Activated CD4-positive, alpha-beta memory T cell treated with anti-CD3 and anti-CD28 coated beads for 36 hours (primary cell): ENCODE measurements at regions of chr17 and their contacts with region 1.

Region 1: GRCh38 chr17:57243171-57243948 is 13.0 kb upstream of the MSI2 start:
- DNase-seq: peak; percentile 86
- H3K4me3 Mint-ChIP-seq: no peak overlapping the region
- H3K27ac Mint-ChIP-seq: no peak overlapping the region
- H3K4me1 Mint-ChIP-seq: no peaks in the 10 kb centered on the region
- H3K27me3 Mint-ChIP-seq: peaks cover 2% of the 10 kb centered on the region

Region 2: GRCh38 chr17:56960596-56961538 is 282.5 kb before region 1 on chr17 and contains the start of gene COIL:
- CTCF ChIA-PET with region 1: no interaction called
- POLR2A ChIA-PET with region 1: no interaction called
- intact Hi-C with region 1: no loop called
- DNase-seq: peak; percentile 95
- H3K4me3 Mint-ChIP-seq: peak within 1 kb of the TSS; percentile 80
- H3K27ac Mint-ChIP-seq: peak within 1 kb of the TSS; percentile 85
- H3K4me1 Mint-ChIP-seq: peaks cover 26% of the 10 kb centered on the region
- H3K27me3 Mint-ChIP-seq: no peaks in the 10 kb centered on the region
- total RNA-seq, gene COIL: 16.9 TPM

Region 3: DNA sequence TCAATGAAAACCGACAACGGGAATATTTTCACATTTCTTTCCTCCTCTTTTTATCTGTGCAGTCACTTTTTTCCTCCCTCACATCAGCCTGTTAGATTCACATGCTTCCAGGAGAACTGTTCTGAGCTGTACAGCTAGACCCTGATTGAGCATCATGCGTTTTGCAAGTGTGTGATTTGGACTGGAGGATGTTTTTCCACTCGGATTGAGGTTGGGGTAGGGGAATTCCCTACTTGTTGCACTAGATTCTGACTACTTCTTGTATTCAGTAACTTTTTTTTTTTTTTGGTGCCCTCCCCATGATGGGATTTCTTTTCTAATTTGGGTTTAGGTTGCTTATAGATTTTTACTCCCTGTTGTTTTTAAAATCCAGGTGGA is 17.7 kb after region 1 on chr17:
- CTCF ChIA-PET with region 1: interaction called, 29 read pairs
- POLR2A ChIA-PET with region 1: interaction called, 3 read pairs
- intact Hi-C with region 1: no loop called
- DNase-seq: peak; percentile 28
- H3K4me3 Mint-ChIP-seq: no peak overlapping the region
- H3K27ac Mint-ChIP-seq: no peak overlapping the region
- H3K4me1 Mint-ChIP-seq: peaks cover 57% of the 10 kb centered on the region
- H3K27me3 Mint-ChIP-seq: no peaks in the 10 kb centered on the region

Region 4: DNA sequence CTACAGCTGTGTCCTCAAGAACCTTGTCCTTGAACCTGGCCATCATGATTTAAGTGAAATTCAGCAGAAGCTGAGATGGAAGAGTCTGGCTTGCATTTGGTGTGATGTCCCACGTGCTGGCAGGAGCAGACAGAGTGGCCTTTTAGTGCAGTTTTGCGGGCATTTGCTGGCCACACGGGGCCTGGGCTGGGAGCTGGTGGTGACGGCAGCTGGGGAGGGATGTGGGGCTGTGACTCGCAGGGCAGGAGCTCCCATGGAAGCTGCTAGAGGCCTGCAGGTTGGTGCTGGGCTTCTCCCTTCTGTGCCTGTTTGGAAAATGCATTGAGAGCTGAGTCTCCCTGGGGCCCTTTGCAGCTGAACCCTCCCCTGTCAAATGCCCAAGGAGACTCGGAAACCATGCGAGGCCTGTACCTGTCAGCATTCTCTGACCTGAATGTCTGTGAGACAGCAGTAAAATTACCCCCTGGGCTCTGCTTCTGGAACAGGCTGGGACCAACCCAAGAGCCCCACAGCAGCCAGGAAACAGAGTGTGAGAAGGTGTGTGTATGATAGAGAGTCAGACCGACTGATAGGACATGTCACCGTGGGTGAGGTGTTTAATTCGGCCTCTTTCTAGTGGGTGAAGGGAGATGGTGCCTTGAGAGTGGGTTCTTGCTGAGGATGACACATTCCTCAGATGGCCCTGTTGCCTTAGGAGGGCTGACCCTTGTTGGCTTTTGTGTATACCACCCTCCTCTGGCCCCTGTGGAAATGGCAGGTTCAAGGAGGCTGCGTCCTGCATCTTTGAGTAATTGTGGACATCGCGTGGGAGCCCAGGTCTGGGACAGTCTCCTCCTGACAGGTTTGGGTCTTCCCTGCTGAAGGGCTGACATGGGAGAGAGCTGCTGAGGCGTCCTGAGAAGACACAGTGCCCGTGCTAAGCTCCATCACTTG is 158.5 kb after region 1 on chr17:
- CTCF ChIA-PET with region 1: interaction called, 20 read pairs
- POLR2A ChIA-PET with region 1: no interaction called
- intact Hi-C with region 1: no loop called
- DNase-seq: no peak
- H3K4me3 Mint-ChIP-seq: no peak overlapping the region
- H3K27ac Mint-ChIP-seq: no peak overlapping the region
- H3K4me1 Mint-ChIP-seq: peaks cover 18% of the 10 kb centered on the region
- H3K27me3 Mint-ChIP-seq: no peaks in the 10 kb centered on the region

Region 5: DNA sequence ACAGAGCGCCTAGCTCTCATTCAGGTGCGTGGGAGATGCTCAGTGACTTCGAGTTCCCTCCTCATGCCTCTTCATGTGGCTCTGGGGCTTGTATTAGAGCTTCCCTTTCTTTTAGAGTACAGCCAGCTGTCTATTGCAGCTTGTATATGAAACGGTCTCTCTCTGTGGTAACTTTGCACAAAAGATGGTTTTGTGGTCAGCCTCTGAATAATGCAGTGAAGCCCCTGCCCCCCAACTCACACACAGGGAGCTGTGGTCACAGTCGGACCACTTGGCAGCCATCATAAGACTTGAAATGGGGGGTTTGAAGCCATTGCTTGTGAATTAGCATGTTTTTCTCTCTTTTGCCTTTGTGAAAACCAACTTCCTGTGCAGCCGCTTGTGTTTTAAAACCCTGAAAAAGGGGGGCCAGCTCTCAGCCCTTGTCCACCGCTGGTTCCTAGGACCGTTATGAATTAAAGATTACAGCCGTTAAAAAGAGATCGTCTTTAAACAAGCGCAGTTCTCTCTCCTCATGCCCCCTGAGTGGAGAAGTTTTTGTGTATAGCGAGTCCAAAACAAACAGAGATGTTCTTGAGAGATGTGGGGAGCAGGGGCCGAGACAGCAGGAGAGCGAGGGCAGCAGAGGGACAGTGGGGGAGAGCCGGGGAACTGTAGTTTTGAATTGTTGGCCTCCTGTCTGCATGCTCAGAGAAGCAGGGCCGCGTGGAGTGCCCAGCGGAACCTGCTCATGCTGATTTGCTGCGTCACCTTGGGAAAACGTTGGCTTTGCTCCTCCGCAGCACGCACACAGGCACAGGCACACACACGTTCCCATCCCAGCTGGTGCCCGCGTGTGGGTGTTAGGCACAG is 211.9 kb after region 1 on chr17:
- CTCF ChIA-PET with region 1: interaction called, 11 read pairs
- POLR2A ChIA-PET with region 1: no interaction called
- intact Hi-C with region 1: loop called (anchors 5 kb)
- DNase-seq: peak; percentile 53
- H3K4me3 Mint-ChIP-seq: no peak overlapping the region
- H3K27ac Mint-ChIP-seq: peak overlapping the region; percentile 82
- H3K4me1 Mint-ChIP-seq: peaks cover 78% of the 10 kb centered on the region
- H3K27me3 Mint-ChIP-seq: no peaks in the 10 kb centered on the region

Region 6: GRCh38 chr17:57498443-57498842 is 255.1 kb after region 1 on chr17:
- CTCF ChIA-PET with region 1: interaction called, 10 read pairs
- POLR2A ChIA-PET with region 1: no interaction called
- intact Hi-C with region 1: no loop called
- DNase-seq: no peak
- H3K4me3 Mint-ChIP-seq: no peak overlapping the region
- H3K27ac Mint-ChIP-seq: peak overlapping the region; percentile 33
- H3K4me1 Mint-ChIP-seq: peaks cover 34% of the 10 kb centered on the region
- H3K27me3 Mint-ChIP-seq: no peaks in the 10 kb centered on the region

Region 7: GRCh38 chr17:57671667-57672632 is 428.6 kb after region 1 on chr17:
- CTCF ChIA-PET with region 1: interaction called, 87 read pairs
- POLR2A ChIA-PET with region 1: no interaction called
- intact Hi-C with region 1: loop called (anchors 2 kb)
- DNase-seq: peak; percentile 80
- H3K4me3 Mint-ChIP-seq: no peak overlapping the region
- H3K27ac Mint-ChIP-seq: peak overlapping the region; percentile 57
- H3K4me1 Mint-ChIP-seq: peaks cover 30% of the 10 kb centered on the region
- H3K27me3 Mint-ChIP-seq: no peaks in the 10 kb centered on the region